Activated CD4-positive, alpha-beta T cell treated with anti-CD3 and anti-CD28 coated beads for 36 hours (primary cell): ENCODE measurements at regions of chr7 and their contacts with region 1.

Region 1: GRCh38 chr7:109284943-109285342 is 715.3 kb downstream of the DNAJB9 start:
- DNase-seq: no peak
- ATAC-seq: no peak
- H3K4me3 Mint-ChIP-seq: no peak overlapping the region
- H3K27ac Mint-ChIP-seq: no peak overlapping the region
- H3K4me1 Mint-ChIP-seq: no peaks in the 10 kb centered on the region
- H3K27me3 Mint-ChIP-seq: no peaks in the 10 kb centered on the region

Region 2: DNA sequence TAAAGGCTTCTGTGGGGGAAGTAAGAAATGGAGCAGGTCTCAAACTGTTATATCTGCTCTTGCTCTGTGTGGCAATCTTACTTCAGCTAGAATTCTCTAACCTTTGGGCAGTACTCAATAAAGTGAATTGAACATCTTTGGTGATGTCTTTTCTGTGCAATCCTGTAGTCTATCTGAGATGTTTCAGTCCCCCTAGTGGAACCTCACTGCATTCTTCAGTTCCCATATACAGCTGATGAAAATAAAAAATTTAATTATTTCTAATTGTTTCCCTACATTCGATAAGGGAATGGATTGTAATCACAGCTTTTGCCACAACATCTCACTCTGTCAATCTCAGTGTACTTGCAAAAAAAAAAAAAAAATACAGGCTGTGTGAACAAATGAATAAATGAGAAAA is 192.7 kb before region 1 on chr7:
- CTCF ChIA-PET with region 1: no interaction called
- POLR2A ChIA-PET with region 1: no interaction called
- intact Hi-C with region 1: no loop called
- DNase-seq: no peak
- ATAC-seq: no peak
- H3K4me3 Mint-ChIP-seq: no peak overlapping the region
- H3K27ac Mint-ChIP-seq: no peak overlapping the region
- H3K4me1 Mint-ChIP-seq: no peaks in the 10 kb centered on the region
- H3K27me3 Mint-ChIP-seq: no peaks in the 10 kb centered on the region

Region 3: DNA sequence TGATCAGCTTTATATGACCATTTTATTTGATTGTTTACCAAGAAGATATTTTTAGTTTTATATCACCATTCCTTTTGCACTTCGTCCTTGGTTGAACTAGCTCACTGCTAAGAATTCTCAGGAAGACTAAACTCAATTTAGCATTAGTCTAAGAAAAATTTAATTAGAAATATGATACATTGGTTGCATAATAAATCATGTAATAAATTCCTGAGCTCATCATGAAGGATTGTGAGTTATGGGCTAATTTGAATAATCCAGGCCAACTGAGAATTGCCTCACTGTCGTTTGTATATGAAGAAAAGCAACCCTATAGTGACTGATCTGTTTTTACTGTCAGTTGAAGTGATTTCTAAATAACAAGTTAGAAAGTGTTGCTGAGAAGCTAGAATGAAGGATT is 10.2 kb after region 1 on chr7:
- CTCF ChIA-PET with region 1: no interaction called
- POLR2A ChIA-PET with region 1: no interaction called
- intact Hi-C with region 1: no loop called
- DNase-seq: no peak
- ATAC-seq: no peak
- H3K4me3 Mint-ChIP-seq: no peak overlapping the region
- H3K27ac Mint-ChIP-seq: no peak overlapping the region
- H3K4me1 Mint-ChIP-seq: no peaks in the 10 kb centered on the region
- H3K27me3 Mint-ChIP-seq: no peaks in the 10 kb centered on the region

Region 4: DNA sequence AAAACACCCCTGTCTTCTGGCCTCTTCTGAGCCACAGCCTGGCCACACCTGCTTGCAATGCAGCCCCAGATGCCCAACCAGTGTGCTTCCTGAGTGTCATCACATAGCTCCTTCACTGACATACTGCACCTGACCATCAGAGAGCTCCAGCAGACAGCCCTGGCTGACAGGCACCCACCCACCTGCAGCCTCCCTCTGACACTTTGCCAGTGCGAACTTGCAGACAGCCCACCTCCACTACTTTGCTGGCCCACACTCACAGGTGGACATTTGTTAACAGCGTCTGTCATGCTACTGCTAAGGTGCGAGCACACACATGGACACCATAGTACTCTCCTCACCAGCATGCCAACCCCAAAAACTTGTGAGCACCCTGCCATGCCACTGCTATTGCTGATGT is 24.8 kb after region 1 on chr7:
- CTCF ChIA-PET with region 1: no interaction called
- POLR2A ChIA-PET with region 1: no interaction called
- intact Hi-C with region 1: loop called in 1 of 2 experiments (anchors 2 kb)
- DNase-seq: no peak
- ATAC-seq: no peak
- H3K4me3 Mint-ChIP-seq: no peak overlapping the region
- H3K27ac Mint-ChIP-seq: no peak overlapping the region
- H3K4me1 Mint-ChIP-seq: no peaks in the 10 kb centered on the region
- H3K27me3 Mint-ChIP-seq: no peaks in the 10 kb centered on the region

Region 5: GRCh38 chr7:109322833-109323232 is 37.9 kb after region 1 on chr7:
- CTCF ChIA-PET with region 1: no interaction called
- POLR2A ChIA-PET with region 1: no interaction called
- intact Hi-C with region 1: no loop called
- DNase-seq: no peak
- ATAC-seq: no peak
- H3K4me3 Mint-ChIP-seq: no peak overlapping the region
- H3K27ac Mint-ChIP-seq: no peak overlapping the region
- H3K4me1 Mint-ChIP-seq: no peaks in the 10 kb centered on the region
- H3K27me3 Mint-ChIP-seq: no peaks in the 10 kb centered on the region